ENCODE measurements at regions of chr17 and their contacts with region 1.

Region 1: GRCh38 chr17:28710861-28711722 is 596 bp downstream of the PROCA1 start:
- DNase-seq: peak; percentile 68 to 89 (median 82)
- ATAC-seq: peak; percentile 91 to 93 (median 92)
- H3K4me3 ChIP-seq: peak overlapping the region; percentile 64 to 69
- H3K4me3 Mint-ChIP-seq: peak overlapping the region; percentile 82 to 92 (median 84)
- H3K27ac ChIP-seq: peak overlapping the region; percentile 76
- H3K27ac Mint-ChIP-seq: peak overlapping the region; percentile 91
- H3K4me1 ChIP-seq: peaks cover 0 to 26% of the 10 kb centered on the region in 2 experiments
- H3K4me1 Mint-ChIP-seq: peaks cover 9 to 19% (median 15%) of the 10 kb centered on the region in 3 donors
- H3K27me3 ChIP-seq: peaks cover 0 to 19% of the 10 kb centered on the region in 2 experiments
- H3K27me3 Mint-ChIP-seq: peaks cover 6 to 13% of the 10 kb centered on the region in 2 donors

Region 2: DNA sequence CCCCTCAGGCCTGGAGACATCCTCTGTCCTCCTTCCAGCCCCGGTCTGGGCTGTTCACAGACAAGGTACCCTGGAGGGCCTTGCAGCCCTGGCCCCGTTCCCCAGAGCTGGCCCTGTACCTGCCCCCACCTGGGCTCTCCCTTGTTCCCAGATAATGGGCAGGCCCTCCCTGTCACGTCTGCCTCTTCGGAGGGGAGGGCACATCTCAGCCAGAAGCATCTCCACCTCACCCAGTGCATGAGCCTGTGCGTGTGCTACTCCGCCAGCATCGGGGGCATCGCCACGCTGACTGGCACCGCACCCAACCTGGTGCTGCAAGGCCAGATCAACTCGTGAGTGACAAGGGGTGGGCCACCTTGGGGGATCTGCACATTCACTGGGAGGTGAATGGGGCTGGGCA is 219.8 kb before region 1 on chr17:
- CTCF ChIA-PET with region 1: no interaction called
- POLR2A ChIA-PET with region 1: interaction called in 1 of 2 experiments, 11 read pairs
- DNase-seq: no peak
- ATAC-seq: no peak
- H3K4me3 ChIP-seq: no peak overlapping the region
- H3K4me3 Mint-ChIP-seq: no peak overlapping the region
- H3K27ac ChIP-seq: no peak overlapping the region
- H3K27ac Mint-ChIP-seq: no peak overlapping the region
- H3K4me1 ChIP-seq: no peaks in the 10 kb centered on the region
- H3K4me1 Mint-ChIP-seq: no peaks in the 10 kb centered on the region
- H3K27me3 ChIP-seq: peaks cover 0 to 39% of the 10 kb centered on the region in 2 experiments
- H3K27me3 Mint-ChIP-seq: peaks cover 0 to 6% of the 10 kb centered on the region in 2 donors

Region 3: GRCh38 chr17:28524476-28525368 is 186.4 kb before region 1 on chr17:
- CTCF ChIA-PET with region 1: no interaction called
- POLR2A ChIA-PET with region 1: no interaction called
- DNase-seq: no peak
- ATAC-seq: no peak
- H3K4me3 ChIP-seq: no peak overlapping the region
- H3K4me3 Mint-ChIP-seq: no peak overlapping the region
- H3K27ac ChIP-seq: no peak overlapping the region
- H3K27ac Mint-ChIP-seq: no peak overlapping the region
- H3K4me1 ChIP-seq: no peaks in the 10 kb centered on the region
- H3K4me1 Mint-ChIP-seq: no peaks in the 10 kb centered on the region
- H3K27me3 ChIP-seq: peaks cover 0 to 4% of the 10 kb centered on the region in 2 experiments
- H3K27me3 Mint-ChIP-seq: no peaks in the 10 kb centered on the region

Region 4: DNA sequence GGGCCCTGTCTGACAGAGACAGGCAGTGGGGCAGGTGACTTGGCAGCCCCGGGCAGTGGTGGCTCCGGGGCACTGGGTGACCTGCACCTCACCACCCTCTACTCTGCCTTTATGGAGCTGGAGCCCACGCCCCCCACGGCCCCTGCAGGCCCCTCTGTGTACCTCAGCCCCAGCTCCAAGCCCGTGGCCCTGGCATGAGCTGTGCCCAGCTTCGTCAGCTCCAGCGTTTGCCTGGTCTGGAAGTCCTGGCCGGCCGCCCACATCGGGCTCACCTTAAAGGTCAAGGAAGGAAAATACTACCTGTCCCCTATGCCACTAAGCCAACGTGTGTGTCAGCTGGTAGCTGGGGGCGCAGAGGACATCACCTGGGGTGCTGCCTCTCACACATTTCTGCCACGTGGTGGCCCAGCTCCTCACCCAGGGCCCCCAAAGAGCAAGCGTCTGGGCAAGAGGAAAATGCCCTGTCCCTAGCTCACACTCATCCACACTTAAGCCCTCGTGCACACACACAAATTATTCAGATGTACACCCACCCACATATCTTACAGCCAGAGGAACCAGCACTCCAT is 173.8 kb before region 1 on chr17:
- CTCF ChIA-PET with region 1: no interaction called
- POLR2A ChIA-PET with region 1: interaction called in 1 of 2 experiments, 10 read pairs
- DNase-seq: no peak
- ATAC-seq: no peak
- H3K4me3 ChIP-seq: no peak overlapping the region
- H3K4me3 Mint-ChIP-seq: no peak overlapping the region
- H3K27ac ChIP-seq: no peak overlapping the region
- H3K27ac Mint-ChIP-seq: no peak overlapping the region
- H3K4me1 ChIP-seq: no peaks in the 10 kb centered on the region
- H3K4me1 Mint-ChIP-seq: no peaks in the 10 kb centered on the region
- H3K27me3 ChIP-seq: peaks cover 0 to 8% of the 10 kb centered on the region in 2 experiments
- H3K27me3 Mint-ChIP-seq: peaks cover 0 to 4% of the 10 kb centered on the region in 2 donors

Region 5: DNA sequence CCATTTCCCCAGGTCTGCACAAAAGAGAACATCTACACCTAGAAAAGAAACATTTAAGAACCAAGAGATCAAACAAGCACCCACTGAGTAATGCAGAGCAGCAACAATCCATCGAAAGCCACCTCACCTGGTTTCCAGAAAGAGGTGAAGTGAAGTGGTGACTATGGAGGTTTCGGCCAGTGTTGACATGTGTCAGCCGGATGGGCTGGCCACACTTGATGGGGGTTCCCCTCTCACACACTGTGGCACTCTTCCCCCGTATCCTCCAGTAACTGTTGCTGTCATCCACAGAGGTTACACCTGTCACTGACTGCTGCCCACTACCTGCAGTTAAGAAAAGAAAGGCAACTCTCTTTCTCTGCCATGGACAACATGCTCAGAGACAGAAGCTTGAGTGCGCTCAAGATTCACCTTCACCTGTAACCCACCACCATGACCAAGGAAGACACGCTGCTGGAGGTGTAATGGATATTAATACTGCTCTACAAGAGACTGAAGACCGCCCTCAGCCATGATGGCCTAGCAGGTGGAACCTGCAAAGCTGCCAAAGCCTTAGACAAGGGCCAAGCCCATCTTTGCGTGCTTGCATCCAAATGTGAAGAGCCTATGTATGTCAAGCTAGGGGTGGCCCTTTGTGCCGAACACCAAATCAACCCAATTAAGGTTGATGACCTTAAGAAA is 55.8 kb before region 1 on chr17:
- CTCF ChIA-PET with region 1: no interaction called
- POLR2A ChIA-PET with region 1: no interaction called
- DNase-seq: no peak
- ATAC-seq: no peak
- H3K4me3 ChIP-seq: no peak overlapping the region
- H3K4me3 Mint-ChIP-seq: no peak overlapping the region
- H3K27ac ChIP-seq: no peak overlapping the region
- H3K27ac Mint-ChIP-seq: peak overlapping the region in 1 of 2 donors; percentile 19
- H3K4me1 ChIP-seq: peaks cover under 1 to 9% of the 10 kb centered on the region in 2 experiments
- H3K4me1 Mint-ChIP-seq: peaks cover 21 to 29% (median 22%) of the 10 kb centered on the region in 3 donors
- H3K27me3 ChIP-seq: no peaks in the 10 kb centered on the region
- H3K27me3 Mint-ChIP-seq: no peaks in the 10 kb centered on the region

Region 6: GRCh38 chr17:28726226-28727130 is 15.4 kb after region 1 on chr17 and contains the start of gene TLCD1:
- CTCF ChIA-PET with region 1: interaction called in 1 of 2 experiments, 13 read pairs
- POLR2A ChIA-PET with region 1: interaction called, 3 to 6 read pairs
- DNase-seq: peak; percentile 74 to 94 (median 86)
- ATAC-seq: peak; percentile 37 to 61 (median 53)
- H3K4me3 ChIP-seq: peak within 1 kb of the TSS; percentile 86 to 87
- H3K4me3 Mint-ChIP-seq: peak within 1 kb of the TSS; percentile 93 to 100 (median 95)
- H3K27ac ChIP-seq: peak within 1 kb of the TSS; percentile 100
- H3K27ac Mint-ChIP-seq: peak within 1 kb of the TSS; percentile 96 to 99
- H3K4me1 ChIP-seq: peaks cover 16 to 58% of the 10 kb centered on the region in 2 experiments
- H3K4me1 Mint-ChIP-seq: peaks cover 51 to 62% (median 59%) of the 10 kb centered on the region in 3 donors
- H3K27me3 ChIP-seq: no peaks in the 10 kb centered on the region
- H3K27me3 Mint-ChIP-seq: no peaks in the 10 kb centered on the region
- total RNA-seq, gene TLCD1: 1.2 to 1.8 (median 1.3) TPM in 4 of 5 donors, not detected in the other

Region 7: GRCh38 chr17:28744972-28745785 is 34.1 kb after region 1 on chr17:
- CTCF ChIA-PET with region 1: no interaction called
- POLR2A ChIA-PET with region 1: interaction called in 1 of 2 experiments, 10 read pairs
- DNase-seq: peak in 7 of 35 experiments; percentile 11 to 55 (median 28)
- ATAC-seq: peak in 3 of 4 experiments; percentile 7 to 18 (median 17)
- H3K4me3 ChIP-seq: peak overlapping the region; percentile 76 to 89
- H3K4me3 Mint-ChIP-seq: peak overlapping the region; percentile 80 to 87 (median 82)
- H3K27ac ChIP-seq: peak overlapping the region; percentile 86
- H3K27ac Mint-ChIP-seq: peak overlapping the region; percentile 76 to 82
- H3K4me1 ChIP-seq: peaks cover 20 to 55% of the 10 kb centered on the region in 2 experiments
- H3K4me1 Mint-ChIP-seq: peaks cover 5 to 40% (median 20%) of the 10 kb centered on the region in 3 donors
- H3K27me3 ChIP-seq: no peaks in the 10 kb centered on the region
- H3K27me3 Mint-ChIP-seq: no peaks in the 10 kb centered on the region